Heart left ventricle (tissue), 16 donors: ENCODE measurements at regions of chr5 and their contacts with region 1.

Region 1: DNA sequence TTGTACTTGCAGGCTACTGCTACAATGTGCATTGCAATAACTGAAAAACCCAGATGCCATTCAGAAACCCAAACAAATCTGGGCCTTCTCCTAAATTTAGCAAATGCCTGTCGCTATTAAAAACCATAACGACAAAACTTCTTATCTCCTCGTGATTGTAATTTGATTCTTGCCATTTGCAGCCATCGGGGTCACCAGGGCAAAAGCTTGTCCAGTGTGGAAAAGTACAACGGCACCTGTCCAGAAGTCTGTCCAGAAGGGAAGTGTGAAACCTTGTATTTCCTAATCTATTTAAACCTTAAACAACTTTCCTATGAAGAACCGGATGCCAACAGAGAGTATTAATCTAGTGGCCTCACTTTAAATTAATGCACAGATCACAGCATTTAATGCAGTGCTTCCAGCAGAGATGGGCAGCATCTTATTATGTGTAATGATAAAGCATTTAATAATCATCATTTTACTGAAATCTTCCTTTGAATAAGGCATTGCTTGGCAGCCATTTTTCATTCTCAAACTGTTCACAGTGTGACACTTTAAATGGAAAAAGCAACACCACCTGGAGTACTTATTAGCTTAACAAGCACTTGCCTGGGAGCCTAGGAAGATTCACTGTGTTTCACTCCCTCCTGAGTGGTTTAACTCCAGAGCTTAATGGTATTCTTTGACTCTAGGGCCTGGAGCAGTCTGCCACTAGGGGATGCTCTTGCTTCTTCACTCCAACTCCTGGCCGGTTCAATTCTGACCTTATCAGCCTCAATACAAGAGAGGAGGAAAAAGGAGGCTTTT is 4.9 kb upstream of the C7 start:
- DNase-seq: peak in 4 of 5 donors; percentile 63 to 67 (median 66)
- ATAC-seq: peak; percentile 93 to 96 (median 95)
- H3K4me3 ChIP-seq: no peak overlapping the region
- H3K27ac ChIP-seq: peak overlapping the region; percentile 23 to 69 (median 50)
- H3K4me1 ChIP-seq: peaks cover 0 to 20% (median 9%) of the 10 kb centered on the region in 12 donors
- H3K27me3 ChIP-seq: no peaks in the 10 kb centered on the region
- CTCF ChIP-seq: peak; percentile 75 to 97 (median 94)
- POLR2A ChIP-seq: no peak

Region 2: GRCh38 chr5:41115281-41115680 is 210.9 kb after region 1 on chr5:
- intact Hi-C with region 1: loop called in 1 of 10 experiments (anchors 5 kb)
- DNase-seq: no peak
- ATAC-seq: no peak
- H3K4me3 ChIP-seq: no peak overlapping the region
- H3K27ac ChIP-seq: no peak overlapping the region
- H3K4me1 ChIP-seq: no peaks in the 10 kb centered on the region
- H3K27me3 ChIP-seq: no peaks in the 10 kb centered on the region
- CTCF ChIP-seq: no peak
- POLR2A ChIP-seq: no peak

Region 3: DNA sequence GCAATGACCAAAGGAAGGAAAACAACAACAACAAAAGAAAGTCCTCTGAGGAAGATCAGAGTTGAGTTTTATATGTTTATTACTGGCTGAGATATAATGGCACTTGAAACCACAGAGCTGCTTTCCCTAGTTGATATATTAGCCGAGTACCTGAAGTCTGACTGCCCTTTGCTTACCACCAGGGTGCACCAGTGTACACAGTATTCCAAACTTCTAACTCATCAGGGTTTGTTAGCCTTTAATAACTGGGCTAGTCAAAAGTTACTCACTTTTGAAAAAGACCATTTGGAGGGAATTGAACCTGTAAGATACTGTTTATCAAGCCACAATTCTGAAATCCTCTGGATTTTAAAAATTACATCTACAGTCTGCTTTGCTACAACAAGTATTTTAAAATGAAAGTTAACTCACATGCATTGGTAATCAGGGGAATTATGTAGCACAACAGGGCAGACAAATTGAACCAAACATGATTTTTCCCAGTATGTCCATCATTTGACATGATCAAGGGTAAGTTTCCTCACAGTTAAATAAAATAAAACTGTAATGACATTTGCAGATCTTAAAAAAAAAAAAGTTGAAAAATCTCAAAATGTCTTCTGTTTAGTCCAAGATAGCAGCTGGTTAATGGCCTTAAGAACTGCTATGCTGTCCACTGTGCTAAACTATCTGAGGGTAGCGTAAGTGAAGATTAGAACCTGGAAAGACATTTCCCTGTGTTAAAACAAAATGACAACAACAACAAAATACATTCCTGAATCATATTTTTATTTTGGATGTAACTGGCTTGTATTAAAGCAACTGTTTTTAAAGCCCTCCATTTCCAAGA is 366.2 kb after region 1 on chr5:
- intact Hi-C with region 1: loop called in 7 of 10 experiments (anchors 5 to 10 kb)
- DNase-seq: peak in 3 of 5 donors; percentile 43 to 57 (median 50)
- ATAC-seq: peak; percentile 88 to 97 (median 94)
- H3K4me3 ChIP-seq: peak overlapping the region in 2 of 12 donors; percentile 4 to 16
- H3K27ac ChIP-seq: peak overlapping the region in 10 of 12 donors; percentile 1 to 47 (median 26)
- H3K4me1 ChIP-seq: peaks cover 0 to 15% (median 5%) of the 10 kb centered on the region in 12 donors
- H3K27me3 ChIP-seq: no peaks in the 10 kb centered on the region
- CTCF ChIP-seq: peak; percentile 44 to 85 (median 74)
- POLR2A ChIP-seq: no peak

Region 4: GRCh38 chr5:41524174-41524573 is 619.8 kb after region 1 on chr5:
- intact Hi-C with region 1: loop called in 6 of 10 experiments (anchors 5 to 10 kb)
- DNase-seq: no peak
- ATAC-seq: no peak
- H3K4me3 ChIP-seq: no peak overlapping the region
- H3K27ac ChIP-seq: no peak overlapping the region
- H3K4me1 ChIP-seq: peaks cover 0 to 18% (median 1%) of the 10 kb centered on the region in 12 donors
- H3K27me3 ChIP-seq: no peaks in the 10 kb centered on the region
- CTCF ChIP-seq: peak in 5 of 12 donors; percentile 9 to 38 (median 22)
- POLR2A ChIP-seq: no peak

Region 5: DNA sequence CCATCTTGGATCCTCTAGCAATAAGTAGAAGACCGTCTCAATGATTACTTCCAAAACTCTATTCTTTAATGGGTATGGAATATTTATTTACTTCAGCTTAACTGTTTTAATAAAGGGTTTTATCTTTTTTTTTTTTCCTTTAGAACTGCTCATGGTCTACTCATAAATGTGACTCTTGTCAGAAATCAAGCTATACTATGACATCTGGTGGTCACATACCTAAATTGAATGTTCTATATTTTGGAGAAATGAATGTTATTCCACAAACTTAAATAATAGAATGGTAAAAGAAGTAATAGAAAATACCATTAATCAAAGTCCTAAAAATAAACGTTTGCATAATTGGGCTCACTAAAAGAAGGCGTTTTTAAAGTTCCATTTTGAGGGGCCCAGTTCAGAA is 737.2 kb after region 1 on chr5:
- intact Hi-C with region 1: loop called in 6 of 10 experiments (anchors 10 kb)
- DNase-seq: no peak
- ATAC-seq: no peak
- H3K4me3 ChIP-seq: no peak overlapping the region
- H3K27ac ChIP-seq: no peak overlapping the region
- H3K4me1 ChIP-seq: no peaks in the 10 kb centered on the region
- H3K27me3 ChIP-seq: no peaks in the 10 kb centered on the region
- CTCF ChIP-seq: peak in 8 of 12 donors; percentile 9 to 43 (median 26)
- POLR2A ChIP-seq: no peak